ENCODE measurements at regions of chr18 and their contacts with region 1.

Region 1: DNA sequence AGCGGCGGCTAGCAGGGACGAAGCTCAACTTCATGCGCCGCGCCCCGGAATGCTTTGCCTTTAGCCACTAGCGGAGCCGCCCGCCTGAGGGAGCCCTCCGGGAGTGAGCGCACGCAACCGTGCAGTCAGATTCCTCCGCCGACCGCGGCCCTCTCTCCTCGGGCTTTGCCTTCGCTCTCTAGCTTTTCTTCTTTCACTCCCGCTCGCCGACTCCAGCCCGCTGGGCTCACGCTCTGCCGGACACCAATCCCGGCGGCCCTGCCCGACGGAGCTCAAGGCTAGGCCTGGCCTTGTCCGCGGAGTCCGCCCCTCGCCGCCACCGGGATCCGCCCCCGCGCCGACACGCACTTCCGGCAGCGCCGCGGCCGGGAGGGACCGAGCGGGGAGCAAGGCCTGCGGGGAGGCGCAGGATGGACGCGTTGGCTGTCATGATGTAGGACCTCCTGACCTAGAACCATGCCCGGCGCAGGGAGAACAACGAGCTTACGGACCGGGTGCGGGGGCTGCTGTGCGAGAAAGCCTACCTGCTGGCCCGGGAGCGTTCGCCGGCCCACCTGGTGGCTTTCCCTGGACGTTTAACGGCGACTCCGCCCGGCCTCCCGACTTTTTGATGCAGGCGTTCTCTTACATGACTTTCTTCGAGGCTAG is 40.8 kb upstream of the AKAIN1 start:
- DNase-seq: peak; percentile 75
- H3K27ac ChIP-seq: peak overlapping the region; percentile 99
- CTCF ChIP-seq: no peak

Region 2: DNA sequence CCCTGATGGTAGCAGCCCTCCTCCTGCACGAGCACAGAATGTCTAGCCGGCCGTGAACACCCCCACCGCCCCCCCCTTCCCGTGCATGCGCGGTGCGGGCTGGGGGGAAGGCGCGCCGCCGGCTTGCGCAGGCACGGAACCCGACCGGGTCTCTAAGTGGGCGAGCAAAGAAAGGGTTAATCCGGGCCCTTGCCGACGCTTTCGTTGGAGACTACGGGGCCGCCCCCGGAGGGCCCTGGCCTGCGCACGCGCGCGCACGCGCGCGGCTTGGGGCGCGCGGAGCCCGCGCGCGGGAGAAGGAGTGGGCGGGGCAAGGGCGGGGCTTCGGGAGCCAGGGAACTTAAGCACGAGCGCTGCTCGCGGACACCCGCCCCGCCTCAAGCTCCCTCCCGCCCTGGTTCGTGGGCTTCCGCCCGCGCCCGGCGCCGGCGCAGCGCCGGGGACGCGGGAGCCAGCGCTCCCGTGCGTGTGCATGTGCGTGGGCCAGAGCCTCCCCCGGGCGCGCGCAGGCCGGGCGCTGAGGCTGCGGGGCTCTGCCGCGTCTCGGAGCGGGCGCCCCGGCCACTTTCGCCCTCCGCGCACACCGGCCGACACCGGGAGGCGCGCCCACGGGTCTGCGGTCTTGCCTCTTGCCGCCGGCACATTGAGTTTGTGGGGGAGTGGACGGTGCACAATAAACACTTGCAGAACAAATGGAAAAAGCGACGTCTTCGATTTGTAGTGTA is 58.3 kb after region 1 on chr18:
- CTCF ChIA-PET with region 1: interaction called, 4 read pairs
- POLR2A ChIA-PET with region 1: interaction called, 18 read pairs
- DNase-seq: peak; percentile 92
- H3K27ac ChIP-seq: peak overlapping the region; percentile 99
- CTCF ChIP-seq: no peak

Measured in RWPE1 (cell line).